Activated CD4-positive, alpha-beta memory T cell treated with anti-CD3 and anti-CD28 coated beads for 36 hours (primary cell): ENCODE measurements at regions of chr4 and their contacts with region 1.

Region 1: GRCh38 chr4:102430461-102430910 is 70.7 kb upstream of the NFKB1 start:
- DNase-seq: no peak
- H3K4me3 Mint-ChIP-seq: peak overlapping the region; percentile 82
- H3K27ac Mint-ChIP-seq: peak overlapping the region; percentile 62
- H3K4me1 Mint-ChIP-seq: peaks cover 8% of the 10 kb centered on the region
- H3K27me3 Mint-ChIP-seq: no peaks in the 10 kb centered on the region

Region 2: GRCh38 chr4:102255454-102255853 is 175.0 kb before region 1 on chr4:
- CTCF ChIA-PET with region 1: no interaction called
- POLR2A ChIA-PET with region 1: no interaction called
- intact Hi-C with region 1: loop called (anchors 1 kb)
- DNase-seq: no peak
- H3K4me3 Mint-ChIP-seq: no peak overlapping the region
- H3K27ac Mint-ChIP-seq: no peak overlapping the region
- H3K4me1 Mint-ChIP-seq: no peaks in the 10 kb centered on the region
- H3K27me3 Mint-ChIP-seq: no peaks in the 10 kb centered on the region

Region 3: GRCh38 chr4:102362922-102363432 is 67.5 kb before region 1 on chr4:
- CTCF ChIA-PET with region 1: no interaction called
- POLR2A ChIA-PET with region 1: no interaction called
- intact Hi-C with region 1: no loop called
- DNase-seq: no peak
- H3K4me3 Mint-ChIP-seq: no peak overlapping the region
- H3K27ac Mint-ChIP-seq: no peak overlapping the region
- H3K4me1 Mint-ChIP-seq: no peaks in the 10 kb centered on the region
- H3K27me3 Mint-ChIP-seq: peaks cover 4% of the 10 kb centered on the region

Region 4: DNA sequence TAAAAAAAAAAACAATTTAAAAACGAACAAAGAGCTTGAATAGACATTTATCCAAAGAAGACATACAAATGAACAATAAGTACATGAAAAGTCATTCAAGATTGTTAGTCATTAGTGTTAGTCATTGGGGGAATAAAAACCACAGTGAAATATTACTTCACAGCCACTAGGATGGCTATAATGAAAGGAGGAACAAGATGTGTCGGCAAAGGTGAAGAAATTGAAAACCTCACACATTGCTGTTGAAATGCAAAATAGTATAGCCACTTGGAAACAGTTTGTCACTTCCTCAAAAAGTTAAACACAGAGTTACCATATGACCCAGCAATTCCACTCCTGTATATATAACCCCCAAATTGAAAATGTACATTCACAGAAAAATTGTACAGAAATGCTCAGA is 40.0 kb before region 1 on chr4:
- CTCF ChIA-PET with region 1: interaction called, 9 read pairs
- POLR2A ChIA-PET with region 1: no interaction called
- intact Hi-C with region 1: loop called (anchors 1 kb)
- DNase-seq: no peak
- H3K4me3 Mint-ChIP-seq: no peak overlapping the region
- H3K27ac Mint-ChIP-seq: no peak overlapping the region
- H3K4me1 Mint-ChIP-seq: peaks cover 14% of the 10 kb centered on the region
- H3K27me3 Mint-ChIP-seq: peaks cover 15% of the 10 kb centered on the region

Region 5: GRCh38 chr4:102518703-102519131 is 88.2 kb after region 1 on chr4:
- CTCF ChIA-PET with region 1: no interaction called
- POLR2A ChIA-PET with region 1: no interaction called
- intact Hi-C with region 1: no loop called
- DNase-seq: peak; percentile 20
- H3K4me3 Mint-ChIP-seq: no peak overlapping the region
- H3K27ac Mint-ChIP-seq: peak overlapping the region; percentile 66
- H3K4me1 Mint-ChIP-seq: peaks cover 76% of the 10 kb centered on the region
- H3K27me3 Mint-ChIP-seq: no peaks in the 10 kb centered on the region

Region 6: GRCh38 chr4:102627831-102628523 is 197.5 kb after region 1 on chr4:
- CTCF ChIA-PET with region 1: interaction called, 11 read pairs
- POLR2A ChIA-PET with region 1: no interaction called
- intact Hi-C with region 1: loop called (anchors 1 kb)
- DNase-seq: peak; percentile 37
- H3K4me3 Mint-ChIP-seq: no peak overlapping the region
- H3K27ac Mint-ChIP-seq: peak overlapping the region; percentile 69
- H3K4me1 Mint-ChIP-seq: peaks cover 67% of the 10 kb centered on the region
- H3K27me3 Mint-ChIP-seq: no peaks in the 10 kb centered on the region

Region 7: GRCh38 chr4:103008875-103009729 is 578.6 kb after region 1 on chr4:
- CTCF ChIA-PET with region 1: interaction called, 8 read pairs
- POLR2A ChIA-PET with region 1: no interaction called
- intact Hi-C with region 1: loop called (anchors 1 kb)
- DNase-seq: no peak
- H3K4me3 Mint-ChIP-seq: no peak overlapping the region
- H3K27ac Mint-ChIP-seq: no peak overlapping the region
- H3K4me1 Mint-ChIP-seq: no peaks in the 10 kb centered on the region
- H3K27me3 Mint-ChIP-seq: no peaks in the 10 kb centered on the region